AG04450 (cell line): ENCODE measurements at regions of chr14 and their contacts with region 1.

Region 1: GRCh38 chr14:76050797-76051392 is 65.3 kb downstream of the IFT43 start:
- DNase-seq: peak; percentile 21
- H3K4me3 ChIP-seq: no peak overlapping the region
- H3K27ac ChIP-seq: no peak overlapping the region
- H3K27me3 ChIP-seq: no peaks in the 10 kb centered on the region
- CTCF ChIP-seq: peak; percentile 80

Region 2: GRCh38 chr14:75875958-75876357 is 174.9 kb before region 1 on chr14:
- CTCF ChIA-PET with region 1: no interaction called
- POLR2A ChIA-PET with region 1: no interaction called
- DNase-seq: no peak
- H3K4me3 ChIP-seq: no peak overlapping the region
- H3K27ac ChIP-seq: no peak overlapping the region
- H3K27me3 ChIP-seq: no peaks in the 10 kb centered on the region
- CTCF ChIP-seq: no peak

Region 3: GRCh38 chr14:76012354-76012753 is 38.5 kb before region 1 on chr14:
- CTCF ChIA-PET with region 1: interaction called, 11 read pairs
- POLR2A ChIA-PET with region 1: no interaction called
- DNase-seq: peak; percentile 66
- H3K4me3 ChIP-seq: no peak overlapping the region
- H3K27ac ChIP-seq: peak overlapping the region; percentile 43
- H3K27me3 ChIP-seq: no peaks in the 10 kb centered on the region
- CTCF ChIP-seq: peak; percentile 27

Region 4: DNA sequence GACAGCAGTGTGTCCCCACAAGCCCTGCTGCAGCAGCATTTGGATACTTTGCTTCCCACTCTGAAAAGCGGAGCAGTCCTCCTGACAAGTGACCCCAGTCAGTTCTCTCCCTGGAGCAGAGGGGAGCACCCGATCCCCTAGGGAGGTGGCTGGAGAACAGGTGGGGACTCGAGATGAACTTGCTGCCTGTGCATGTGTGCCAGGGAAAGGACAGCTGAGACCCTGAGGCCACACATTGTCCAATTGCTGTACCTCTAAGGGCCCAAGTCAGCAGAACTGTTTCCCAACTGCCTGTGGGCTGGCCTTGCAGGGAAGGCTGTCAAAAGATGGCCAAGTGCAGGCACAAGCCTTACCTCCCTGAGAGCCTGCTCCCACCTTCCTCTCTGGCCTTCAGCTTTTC is 10.2 kb before region 1 on chr14:
- CTCF ChIA-PET with region 1: interaction called, 14 read pairs
- POLR2A ChIA-PET with region 1: no interaction called
- DNase-seq: no peak
- H3K4me3 ChIP-seq: no peak overlapping the region
- H3K27ac ChIP-seq: no peak overlapping the region
- H3K27me3 ChIP-seq: no peaks in the 10 kb centered on the region
- CTCF ChIP-seq: no peak

Region 5: DNA sequence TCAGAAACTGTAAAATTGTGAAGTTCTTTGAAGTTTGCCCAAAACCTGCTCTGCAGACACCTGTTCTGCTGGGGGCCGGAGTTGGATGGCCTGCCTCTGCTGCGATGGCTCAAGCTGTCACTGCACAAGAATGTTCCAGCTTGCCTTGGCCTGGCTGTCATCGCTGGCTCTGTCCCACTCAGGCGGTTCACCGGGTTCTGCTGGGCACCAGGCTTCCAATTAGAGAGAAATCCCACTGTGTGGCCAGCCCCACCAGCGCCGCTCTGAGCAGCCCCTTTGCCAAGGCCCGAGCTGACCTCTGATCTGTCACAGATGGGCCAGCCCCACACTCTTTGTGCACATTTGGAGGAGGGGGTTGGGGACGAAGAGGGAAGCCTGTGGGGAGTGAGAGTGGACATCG is 29.1 kb after region 1 on chr14:
- CTCF ChIA-PET with region 1: interaction called, 11 read pairs
- POLR2A ChIA-PET with region 1: no interaction called
- DNase-seq: no peak
- H3K4me3 ChIP-seq: no peak overlapping the region
- H3K27ac ChIP-seq: no peak overlapping the region
- H3K27me3 ChIP-seq: no peaks in the 10 kb centered on the region
- CTCF ChIP-seq: no peak

Region 6: GRCh38 chr14:76386915-76387782 is 336.3 kb after region 1 on chr14:
- CTCF ChIA-PET with region 1: interaction called, 147 read pairs
- POLR2A ChIA-PET with region 1: no interaction called
- DNase-seq: peak; percentile 11
- H3K4me3 ChIP-seq: no peak overlapping the region
- H3K27ac ChIP-seq: no peak overlapping the region
- H3K27me3 ChIP-seq: peaks cover 18% of the 10 kb centered on the region
- CTCF ChIP-seq: peak; percentile 99

Region 7: GRCh38 chr14:76446921-76447320 is 396.0 kb after region 1 on chr14:
- CTCF ChIA-PET with region 1: no interaction called
- POLR2A ChIA-PET with region 1: no interaction called
- DNase-seq: no peak
- H3K4me3 ChIP-seq: no peak overlapping the region
- H3K27ac ChIP-seq: no peak overlapping the region
- H3K27me3 ChIP-seq: no peaks in the 10 kb centered on the region
- CTCF ChIP-seq: no peak